Activated CD4-positive, alpha-beta memory T cell treated with anti-CD3 and anti-CD28 coated beads for 36 hours (primary cell): ENCODE measurements at regions of chr17 and their contacts with region 1.

Region 1: DNA sequence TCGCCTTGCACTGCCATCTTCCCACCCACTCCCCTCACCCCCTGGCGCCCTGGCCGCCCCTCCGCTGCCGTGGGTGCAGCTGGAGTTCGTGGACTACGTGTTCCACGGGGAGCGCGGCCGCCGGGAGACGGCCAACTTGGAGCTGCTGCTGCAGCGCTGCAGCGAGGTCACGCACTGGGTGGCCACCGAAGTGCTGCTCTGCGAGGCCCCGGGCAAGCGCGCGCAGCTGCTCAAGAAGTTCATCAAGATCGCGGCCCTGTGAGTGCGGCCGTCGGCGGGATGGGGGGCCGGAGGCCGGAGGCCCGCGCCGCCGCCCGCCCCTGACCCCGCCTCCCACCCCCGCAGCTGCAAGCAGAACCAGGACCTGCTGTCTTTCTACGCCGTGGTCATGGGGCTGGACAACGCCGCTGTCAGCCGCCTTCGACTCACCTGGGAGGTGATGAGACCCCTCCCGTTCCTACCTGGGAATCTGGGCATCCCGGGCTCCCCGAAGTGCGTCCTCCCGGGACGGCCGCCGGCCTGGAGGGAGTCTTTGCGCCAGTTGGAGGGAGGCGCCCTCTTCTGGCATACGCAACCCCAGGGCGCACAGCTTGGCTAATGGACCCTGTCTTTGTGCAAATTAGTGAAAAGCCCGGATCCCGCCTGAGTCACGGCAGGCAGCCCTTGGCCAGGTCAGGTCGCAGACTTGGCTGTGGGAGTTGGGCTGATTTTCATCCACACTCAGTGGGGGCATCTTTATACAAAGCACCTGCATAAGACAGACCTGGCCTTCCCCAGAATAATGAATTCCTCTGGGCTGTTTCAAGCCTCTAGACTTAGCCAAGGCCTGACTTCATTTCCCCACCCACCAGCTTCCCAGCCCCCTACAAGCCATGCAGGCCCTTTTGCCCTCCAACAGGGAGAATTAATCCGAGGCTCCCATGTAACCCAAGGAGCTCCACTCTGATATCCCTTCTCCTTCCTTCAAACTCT is 14.3 kb downstream of the RAPGEFL1 start:
- DNase-seq: peak; percentile 80
- H3K4me3 Mint-ChIP-seq: peak overlapping the region; percentile 90
- H3K27ac Mint-ChIP-seq: no peak overlapping the region
- H3K4me1 Mint-ChIP-seq: peaks cover 8% of the 10 kb centered on the region
- H3K27me3 Mint-ChIP-seq: no peaks in the 10 kb centered on the region

Region 2: GRCh38 chr17:39894681-39895376 is 296.7 kb before region 1 on chr17:
- CTCF ChIA-PET with region 1: no interaction called
- POLR2A ChIA-PET with region 1: no interaction called
- intact Hi-C with region 1: no loop called
- DNase-seq: no peak
- H3K4me3 Mint-ChIP-seq: no peak overlapping the region
- H3K27ac Mint-ChIP-seq: peak overlapping the region; percentile 83
- H3K4me1 Mint-ChIP-seq: peaks cover 10% of the 10 kb centered on the region
- H3K27me3 Mint-ChIP-seq: peaks cover 2% of the 10 kb centered on the region

Region 3: DNA sequence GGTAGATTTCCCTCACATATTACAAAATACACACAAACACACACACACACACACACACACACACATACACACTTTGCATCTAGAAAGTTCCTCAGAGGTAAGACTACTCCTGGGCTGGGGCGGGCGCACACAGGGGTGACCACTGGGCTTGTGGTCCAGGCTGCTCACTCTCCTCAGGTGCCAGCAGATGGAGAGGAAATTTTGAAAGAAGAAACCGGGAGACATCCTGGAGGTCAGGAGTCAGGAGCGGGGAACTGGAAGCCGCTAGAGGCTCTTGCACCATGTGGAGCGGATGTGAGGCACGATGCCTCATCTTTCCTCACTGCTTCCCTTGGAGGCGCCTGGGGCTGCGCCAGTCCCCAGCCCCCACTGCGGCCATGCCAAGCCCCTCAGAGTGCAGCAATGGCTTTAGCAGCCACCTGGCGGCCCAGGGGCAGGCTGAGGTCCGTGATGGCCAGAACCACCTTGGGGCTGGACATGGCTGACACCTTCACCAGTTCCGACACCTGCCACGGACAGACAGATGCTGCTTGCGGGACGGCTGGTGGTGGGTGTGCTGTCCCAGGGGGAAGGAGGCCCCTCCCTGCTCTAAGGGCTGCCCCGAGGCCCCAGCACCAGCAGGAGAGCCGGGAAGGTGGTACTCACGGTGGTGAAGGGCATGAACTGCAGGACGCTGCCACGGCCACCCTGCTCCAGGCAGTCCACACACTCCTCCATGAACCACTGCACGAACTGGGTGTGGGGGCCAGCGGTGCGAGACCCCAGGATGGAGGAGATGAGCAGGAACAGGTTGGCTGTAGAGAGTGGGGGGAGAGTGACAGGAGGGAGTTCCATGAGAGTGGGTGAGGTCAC is 172.2 kb before region 1 on chr17:
- CTCF ChIA-PET with region 1: interaction called, 36 read pairs
- POLR2A ChIA-PET with region 1: no interaction called
- intact Hi-C with region 1: no loop called
- DNase-seq: no peak
- H3K4me3 Mint-ChIP-seq: no peak overlapping the region
- H3K27ac Mint-ChIP-seq: no peak overlapping the region
- H3K4me1 Mint-ChIP-seq: no peaks in the 10 kb centered on the region
- H3K27me3 Mint-ChIP-seq: no peaks in the 10 kb centered on the region

Region 4: DNA sequence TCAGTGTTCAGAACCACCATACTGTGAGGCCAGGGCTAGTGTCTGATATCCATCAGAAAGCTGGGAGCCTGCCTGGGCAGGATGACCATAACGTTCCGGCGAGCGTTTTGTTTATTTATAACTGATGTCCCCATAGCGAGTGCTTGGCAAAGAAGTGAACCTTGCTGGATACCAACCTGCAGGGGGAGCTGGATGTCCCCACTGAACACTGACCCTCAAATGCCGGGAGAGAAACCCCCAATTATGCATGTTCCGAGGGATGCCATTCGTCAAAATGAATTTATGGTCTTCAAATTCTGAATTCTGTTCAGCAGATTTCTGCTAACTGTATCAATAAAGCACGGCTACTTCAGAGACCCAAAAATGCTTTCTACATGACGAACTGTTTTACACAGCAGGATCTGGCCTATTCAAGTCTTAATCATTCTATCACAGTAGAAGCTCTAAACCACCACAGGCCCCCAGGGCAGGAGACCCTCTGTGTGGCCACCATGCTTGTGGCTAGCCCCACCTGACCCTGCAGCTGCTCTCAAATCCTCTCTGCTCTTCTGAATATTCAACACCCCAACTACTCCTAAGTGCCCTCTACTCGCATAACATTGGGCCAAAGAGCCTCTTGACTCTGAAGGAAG is 152.5 kb before region 1 on chr17:
- CTCF ChIA-PET with region 1: no interaction called
- POLR2A ChIA-PET with region 1: no interaction called
- intact Hi-C with region 1: no loop called
- DNase-seq: no peak
- H3K4me3 Mint-ChIP-seq: no peak overlapping the region
- H3K27ac Mint-ChIP-seq: no peak overlapping the region
- H3K4me1 Mint-ChIP-seq: no peaks in the 10 kb centered on the region
- H3K27me3 Mint-ChIP-seq: no peaks in the 10 kb centered on the region

Region 5: GRCh38 chr17:40168262-40168832 is 23.2 kb before region 1 on chr17:
- CTCF ChIA-PET with region 1: interaction called, 29 read pairs
- POLR2A ChIA-PET with region 1: no interaction called
- intact Hi-C with region 1: no loop called
- DNase-seq: peak; percentile 34
- H3K4me3 Mint-ChIP-seq: no peak overlapping the region
- H3K27ac Mint-ChIP-seq: peak overlapping the region; percentile 1
- H3K4me1 Mint-ChIP-seq: peaks cover 3% of the 10 kb centered on the region
- H3K27me3 Mint-ChIP-seq: no peaks in the 10 kb centered on the region

Region 6: DNA sequence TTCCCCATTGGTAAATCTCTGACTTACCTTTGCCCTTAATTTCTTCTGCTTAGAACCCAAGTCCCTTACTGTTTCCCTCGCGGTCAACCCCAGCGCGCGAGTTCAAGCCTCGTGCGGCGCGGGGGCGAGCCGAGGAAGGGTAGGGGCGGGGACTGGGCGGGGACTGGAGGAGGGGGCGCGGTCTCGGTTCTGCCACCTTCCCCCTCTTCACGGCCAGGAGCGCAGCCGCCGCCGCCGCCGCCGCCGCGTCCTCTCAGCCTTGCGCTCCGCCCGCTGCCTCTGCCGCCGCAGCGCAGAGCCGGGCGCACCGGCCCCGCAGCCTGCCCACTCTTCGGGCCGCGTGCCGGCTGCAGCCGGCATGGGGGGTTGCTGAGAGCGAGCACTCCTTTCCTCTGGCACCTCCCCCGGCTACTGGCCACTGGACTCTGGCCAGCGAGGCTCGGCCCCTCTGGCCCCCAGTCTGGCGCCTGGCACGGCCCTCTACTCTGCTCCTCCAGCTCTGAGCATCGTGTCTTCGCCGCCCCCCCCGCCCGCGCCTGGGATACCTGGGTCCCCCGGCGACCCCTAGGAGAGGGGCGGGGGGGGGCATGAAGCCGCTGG is 14.1 kb before region 1 on chr17 and contains the start of gene RAPGEFL1:
- CTCF ChIA-PET with region 1: interaction called, 20 read pairs
- POLR2A ChIA-PET with region 1: no interaction called
- intact Hi-C with region 1: no loop called
- DNase-seq: peak; percentile 93
- H3K4me3 Mint-ChIP-seq: peak within 1 kb of the TSS; percentile 34
- H3K27ac Mint-ChIP-seq: no peak within 1 kb of the TSS
- H3K4me1 Mint-ChIP-seq: peaks cover 7% of the 10 kb centered on the region
- H3K27me3 Mint-ChIP-seq: no peaks in the 10 kb centered on the region
- total RNA-seq, gene RAPGEFL1: 4.9 to 6.1 TPM

Region 7: DNA sequence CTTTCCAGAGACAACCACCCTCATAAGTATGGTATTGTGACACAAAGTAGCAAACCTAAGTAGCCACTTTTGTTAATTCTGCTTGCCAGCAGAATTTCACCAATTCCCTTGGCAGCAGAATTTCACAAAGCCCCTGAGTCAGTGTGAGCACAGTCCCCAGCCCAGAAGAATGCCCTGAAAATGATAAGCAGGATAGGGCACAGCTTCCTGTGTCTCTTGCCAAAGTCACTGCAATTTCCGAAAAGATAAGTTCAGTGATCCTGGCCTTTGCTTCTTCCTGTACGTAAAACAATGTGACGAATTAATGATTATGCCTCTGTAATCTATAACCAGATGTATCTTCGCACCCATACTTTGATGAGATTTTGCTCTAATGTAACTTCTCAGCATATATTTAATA is 11.6 kb after region 1 on chr17:
- CTCF ChIA-PET with region 1: interaction called, 14 read pairs
- POLR2A ChIA-PET with region 1: no interaction called
- intact Hi-C with region 1: no loop called
- DNase-seq: no peak
- H3K4me3 Mint-ChIP-seq: no peak overlapping the region
- H3K27ac Mint-ChIP-seq: no peak overlapping the region
- H3K4me1 Mint-ChIP-seq: no peaks in the 10 kb centered on the region
- H3K27me3 Mint-ChIP-seq: peaks cover 2% of the 10 kb centered on the region

Region 8: GRCh38 chr17:40219073-40219860 is 27.7 kb after region 1 on chr17 and contains the start of gene WIPF2:
- CTCF ChIA-PET with region 1: interaction called, 13 read pairs
- POLR2A ChIA-PET with region 1: no interaction called
- intact Hi-C with region 1: no loop called
- DNase-seq: peak; percentile 99
- H3K4me3 Mint-ChIP-seq: peak within 1 kb of the TSS; percentile 86
- H3K27ac Mint-ChIP-seq: peak within 1 kb of the TSS; percentile 92
- H3K4me1 Mint-ChIP-seq: peaks cover 27% of the 10 kb centered on the region
- H3K27me3 Mint-ChIP-seq: no peaks in the 10 kb centered on the region
- total RNA-seq, gene WIPF2: 19.0 to 20.6 TPM

Region 9: GRCh38 chr17:40485851-40486512 is 294.5 kb after region 1 on chr17:
- CTCF ChIA-PET with region 1: no interaction called
- POLR2A ChIA-PET with region 1: no interaction called
- intact Hi-C with region 1: no loop called
- DNase-seq: peak; percentile 76
- H3K4me3 Mint-ChIP-seq: no peak overlapping the region
- H3K27ac Mint-ChIP-seq: peak overlapping the region; percentile 74
- H3K4me1 Mint-ChIP-seq: peaks cover 76% of the 10 kb centered on the region
- H3K27me3 Mint-ChIP-seq: no peaks in the 10 kb centered on the region